ENCODE measurements at regions of chr10 and their contacts with region 1.

Region 1: DNA sequence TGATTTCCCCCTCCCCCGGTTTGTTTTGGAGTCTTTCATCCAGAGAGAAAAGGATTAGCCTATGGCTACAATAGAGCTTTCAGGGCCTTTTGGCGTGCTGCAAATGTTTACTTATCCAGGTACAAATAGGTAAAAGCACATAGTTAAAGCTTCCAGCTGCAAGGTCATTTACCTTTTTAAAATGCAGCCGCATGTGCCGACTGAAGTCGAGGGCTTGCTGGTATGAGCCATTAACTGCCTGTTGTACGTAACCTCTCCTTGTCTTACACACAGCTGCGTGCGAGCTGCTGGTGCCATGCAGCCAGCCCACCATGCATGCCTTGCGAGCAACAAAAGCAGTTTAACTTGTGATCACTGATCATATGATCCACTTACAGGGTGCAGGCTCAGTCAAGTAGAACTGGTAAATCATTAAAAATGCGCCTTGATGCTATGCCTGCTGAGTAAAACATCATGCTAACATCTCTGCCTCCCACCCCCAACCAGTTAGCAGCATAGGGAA is 866.4 kb downstream of the LRMDA start:
- DNase-seq: no peak
- ATAC-seq: no peak
- H3K4me3 ChIP-seq: no peak overlapping the region
- H3K27ac ChIP-seq: no peak overlapping the region
- H3K4me1 ChIP-seq: peaks cover 0 to 11% (median 1%) of the 10 kb centered on the region in 9 donors
- H3K27me3 ChIP-seq: no peaks in the 10 kb centered on the region
- CTCF ChIP-seq: no peak

Region 2: DNA sequence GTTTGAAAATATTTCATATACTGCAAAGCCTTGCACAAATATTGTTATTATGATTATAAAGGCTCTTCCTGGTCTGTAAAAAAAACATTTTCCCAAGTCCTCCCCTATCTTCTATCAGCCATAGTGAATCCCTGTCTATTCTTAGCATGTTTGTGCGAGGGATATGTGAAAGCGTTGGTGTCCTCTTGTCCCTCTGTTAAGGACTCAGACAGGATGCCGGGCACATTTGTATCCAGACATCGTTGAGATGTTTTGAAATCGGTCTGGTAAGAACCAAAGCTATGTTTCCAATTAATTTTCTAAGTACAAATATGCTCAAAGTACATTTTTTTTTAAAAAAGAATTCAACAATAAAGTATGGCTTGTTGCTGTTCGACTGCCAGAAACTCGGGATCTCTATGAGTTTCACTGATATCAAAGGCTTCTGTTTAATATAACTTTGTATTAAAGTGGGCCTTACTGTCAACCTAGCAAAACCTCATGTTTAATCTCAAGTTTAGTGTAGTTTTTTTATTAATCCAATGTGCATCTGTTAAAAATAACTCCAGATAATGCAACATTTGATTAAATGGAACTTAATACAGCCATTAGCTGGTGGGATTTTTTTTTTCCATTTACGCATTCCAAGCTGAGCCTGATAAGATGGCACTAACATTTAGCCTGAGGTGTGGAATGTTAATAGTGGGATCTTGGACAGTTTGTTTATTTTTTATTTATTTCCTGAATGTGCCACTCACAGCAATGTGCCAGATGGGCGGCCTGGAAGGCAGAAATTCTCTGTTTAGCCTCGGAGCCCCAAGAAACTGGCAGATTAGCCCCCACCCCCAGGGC is 112.1 kb before region 1 on chr10:
- intact Hi-C with region 1: loop called in 1 of 10 experiments (anchors 10 kb)
- DNase-seq: no peak
- ATAC-seq: peak in 3 of 8 donors; percentile 38 to 77 (median 46)
- H3K4me3 ChIP-seq: no peak overlapping the region
- H3K27ac ChIP-seq: peak overlapping the region in 3 of 10 donors; percentile 3 to 23 (median 20)
- H3K4me1 ChIP-seq: peaks cover 0 to 20% (median 6%) of the 10 kb centered on the region in 9 donors
- H3K27me3 ChIP-seq: no peaks in the 10 kb centered on the region
- CTCF ChIP-seq: no peak